PC-9 (cell line): ENCODE measurements at regions of chr17 and their contacts with region 1.

Region 1: DNA sequence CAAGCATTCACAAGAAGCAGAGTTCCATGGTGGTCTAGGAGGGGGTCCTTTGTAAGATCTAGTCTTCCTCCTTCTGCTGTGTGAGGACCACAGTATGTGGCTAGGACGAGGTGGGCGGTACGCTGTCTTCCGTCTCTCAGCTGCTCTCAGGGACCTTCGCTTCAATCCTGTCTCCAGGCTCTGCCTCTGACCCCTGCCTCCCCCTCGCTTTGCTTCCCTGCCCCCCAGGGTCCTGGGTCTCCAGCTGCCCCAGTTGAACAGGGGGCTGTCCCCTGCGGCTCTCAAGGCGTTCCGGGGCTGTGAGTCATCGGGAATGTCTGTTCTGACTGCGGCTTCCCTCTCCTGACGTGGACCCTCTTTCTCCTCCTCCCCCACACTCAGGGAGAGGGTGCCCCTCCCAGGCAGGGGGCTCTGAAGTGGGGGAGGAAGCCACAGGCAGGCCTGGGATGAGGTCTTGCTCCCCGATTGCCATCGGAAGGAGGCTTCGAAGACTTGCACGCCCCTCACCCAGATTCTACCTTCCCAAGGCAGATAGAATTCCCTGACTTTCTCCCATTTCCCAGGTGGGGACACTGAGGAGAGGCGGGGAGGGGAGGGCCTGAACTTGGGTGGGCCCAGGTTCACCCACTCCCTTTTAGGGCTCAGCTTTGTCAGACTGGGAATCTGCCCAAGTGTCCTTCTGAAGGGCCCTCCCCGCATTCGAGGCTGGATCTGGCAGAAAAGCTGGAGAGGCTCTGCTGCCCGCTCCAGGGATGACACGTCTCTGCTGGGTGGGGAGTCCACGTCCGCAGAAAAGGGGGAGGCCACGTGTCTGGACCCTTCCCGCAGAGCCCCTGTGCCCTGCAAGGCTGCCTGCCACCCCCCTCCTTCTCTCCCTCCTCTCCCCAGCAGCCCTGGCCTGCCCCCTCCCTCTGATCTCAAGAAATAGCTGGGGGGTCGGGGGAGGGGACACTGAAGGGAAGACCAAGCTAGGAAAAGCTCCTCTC is 9.1 kb upstream of the COL1A1 start:
- DNase-seq: peak in 1 of 2 experiments; percentile 48
- H3K4me3 ChIP-seq: no peak overlapping the region
- H3K27ac ChIP-seq: no peak overlapping the region
- H3K4me1 ChIP-seq: peaks cover 12% of the 10 kb centered on the region
- H3K27me3 ChIP-seq: peaks cover 28% of the 10 kb centered on the region
- CTCF ChIP-seq: no peak

Region 2: DNA sequence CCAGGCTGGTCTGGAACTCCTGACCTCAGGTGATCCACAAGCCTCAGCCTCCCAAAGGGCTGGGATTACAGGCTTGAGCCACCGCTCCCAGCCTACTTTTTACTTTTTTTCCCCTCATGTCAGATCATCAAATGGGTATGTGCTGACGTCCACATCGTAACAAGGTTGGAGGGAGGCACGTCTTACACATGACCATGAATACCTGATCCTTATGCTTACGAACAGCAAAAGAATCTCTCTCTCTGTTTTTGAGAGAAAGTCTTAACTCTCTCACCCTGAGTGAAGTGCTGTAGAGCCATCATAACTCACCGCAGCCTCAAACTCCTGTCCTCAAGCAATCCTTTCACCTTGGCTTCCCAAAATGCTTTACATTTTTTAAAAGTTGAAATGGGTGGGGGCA is 34.2 kb after region 1 on chr17:
- CTCF ChIA-PET with region 1: interaction called, 20 read pairs
- POLR2A ChIA-PET with region 1: no interaction called
- intact Hi-C with region 1: no loop called
- DNase-seq: no peak
- H3K4me3 ChIP-seq: no peak overlapping the region
- H3K27ac ChIP-seq: no peak overlapping the region
- H3K4me1 ChIP-seq: no peaks in the 10 kb centered on the region
- H3K27me3 ChIP-seq: no peaks in the 10 kb centered on the region
- CTCF ChIP-seq: no peak

Region 3: DNA sequence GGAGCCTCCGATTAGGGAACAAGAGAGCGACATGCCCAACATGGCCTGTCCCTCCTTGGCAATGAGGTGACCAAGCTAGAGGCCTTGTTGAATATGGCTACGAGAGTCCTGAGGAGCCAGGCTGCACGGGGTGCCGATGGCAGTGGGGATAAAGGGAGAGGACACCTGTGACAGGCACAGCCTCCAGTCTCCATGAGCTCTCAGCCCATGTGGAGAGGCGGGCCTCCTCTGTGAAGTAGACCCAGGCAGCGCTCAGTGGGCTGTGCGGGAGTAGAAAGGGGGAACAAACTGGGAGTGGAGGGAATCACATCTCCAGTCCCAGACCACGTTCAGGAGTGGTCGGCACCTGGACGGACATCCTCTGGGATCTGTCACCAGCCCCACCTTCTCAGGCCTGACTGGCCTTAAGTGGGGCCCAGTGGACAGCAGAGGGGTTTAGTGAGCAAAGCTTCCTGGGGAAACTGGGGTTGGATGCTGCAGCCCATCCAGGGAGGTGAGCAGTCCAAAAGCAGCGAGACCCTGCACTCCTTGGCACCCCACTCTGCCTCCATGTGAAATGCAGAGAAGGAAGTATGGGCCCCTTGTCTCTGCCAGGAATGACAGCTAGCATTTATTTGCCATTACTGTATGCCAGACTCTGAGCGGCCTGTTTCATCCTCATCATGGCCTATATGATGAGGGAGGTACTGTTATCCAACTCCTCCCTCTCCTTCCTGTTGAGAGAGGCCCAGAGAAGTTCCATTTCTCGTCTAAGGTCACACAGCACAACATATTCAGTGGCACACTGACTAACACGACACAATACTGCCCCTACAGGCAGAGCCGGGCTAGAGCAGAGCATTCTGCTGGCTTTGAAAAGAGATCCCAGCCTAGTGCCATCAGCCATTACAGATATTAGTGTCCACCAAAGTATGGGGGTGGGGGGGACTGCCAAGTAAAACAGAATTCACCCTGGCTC is 59.2 kb after region 1 on chr17:
- CTCF ChIA-PET with region 1: interaction called, 10 read pairs
- POLR2A ChIA-PET with region 1: no interaction called
- intact Hi-C with region 1: no loop called
- DNase-seq: peak; percentile 46 to 59
- H3K4me3 ChIP-seq: no peak overlapping the region
- H3K27ac ChIP-seq: no peak overlapping the region
- H3K4me1 ChIP-seq: peaks cover 22% of the 10 kb centered on the region
- H3K27me3 ChIP-seq: no peaks in the 10 kb centered on the region; the same call in 1 of the 2 replicates
- CTCF ChIP-seq: peak; percentile 92